CD8-positive, alpha-beta T cell (primary cell): ENCODE measurements at regions of chr3 and their contacts with region 1.

Region 1: GRCh38 chr3:71444028-71444860 is 139.3 kb downstream of the FOXP1 start:
- DNase-seq: peak; percentile 49 to 95 (median 74)
- ATAC-seq: peak; percentile 77
- H3K4me3 ChIP-seq: peak overlapping the region in 1 of 2 experiments; percentile 6
- H3K4me3 Mint-ChIP-seq: peak overlapping the region; percentile 68
- H3K27ac ChIP-seq: peak overlapping the region; percentile 78 to 83
- H3K27ac Mint-ChIP-seq: peak overlapping the region; percentile 98
- H3K4me1 ChIP-seq: peaks cover 98% of the 10 kb centered on the region
- H3K4me1 Mint-ChIP-seq: peaks cover 97% of the 10 kb centered on the region
- H3K27me3 ChIP-seq: no peaks in the 10 kb centered on the region
- H3K27me3 Mint-ChIP-seq: no peaks in the 10 kb centered on the region
- CTCF ChIP-seq: no peak

Region 2: GRCh38 chr3:71130471-71131374 is 313.5 kb before region 1 on chr3:
- CTCF ChIA-PET with region 1: no interaction called
- POLR2A ChIA-PET with region 1: no interaction called
- intact Hi-C with region 1: loop called in 1 of 2 experiments (anchors 1 kb)
- DNase-seq: peak; percentile 52 to 90 (median 77)
- ATAC-seq: peak; percentile 74
- H3K4me3 ChIP-seq: peak overlapping the region; percentile 56 to 57
- H3K4me3 Mint-ChIP-seq: peak overlapping the region; percentile 87
- H3K27ac ChIP-seq: peak overlapping the region; percentile 82 to 88
- H3K27ac Mint-ChIP-seq: peak overlapping the region; percentile 93
- H3K4me1 ChIP-seq: peaks cover 57% of the 10 kb centered on the region
- H3K4me1 Mint-ChIP-seq: peaks cover 80% of the 10 kb centered on the region
- H3K27me3 ChIP-seq: no peaks in the 10 kb centered on the region
- H3K27me3 Mint-ChIP-seq: no peaks in the 10 kb centered on the region
- CTCF ChIP-seq: no peak

Region 3: DNA sequence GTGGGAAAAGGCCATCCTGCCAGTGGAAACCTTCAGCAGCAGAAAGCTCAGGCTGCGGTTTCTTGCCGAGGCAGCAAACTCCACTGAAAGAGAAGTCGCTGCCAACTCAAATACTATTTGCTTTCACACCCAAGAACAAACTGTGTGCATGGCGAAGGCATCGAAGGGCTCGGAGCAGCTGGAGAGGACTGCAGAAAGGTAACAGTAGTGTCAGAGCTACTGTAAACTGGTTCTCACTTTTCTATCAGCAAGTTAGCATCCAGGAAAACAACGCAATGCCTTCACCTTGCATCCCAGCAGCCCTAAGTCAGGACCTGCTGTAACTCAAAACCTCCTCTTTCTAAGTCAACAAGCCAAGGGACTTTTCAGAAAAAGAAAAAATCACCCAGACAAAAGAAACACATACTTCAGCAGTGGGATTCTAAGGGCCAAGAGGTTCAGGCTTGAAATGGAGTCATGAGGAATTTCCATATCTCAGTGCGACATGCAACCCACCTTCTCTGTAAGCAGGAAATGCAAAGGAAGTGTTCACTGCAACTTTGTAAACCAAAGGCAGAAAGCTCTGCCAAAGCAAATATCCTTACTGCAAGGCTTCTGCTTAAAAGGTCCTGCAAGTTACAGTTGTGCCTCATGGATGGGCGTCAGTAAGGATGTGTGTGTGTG is 54.2 kb before region 1 on chr3:
- CTCF ChIA-PET with region 1: no interaction called
- POLR2A ChIA-PET with region 1: interaction called, 3 read pairs
- intact Hi-C with region 1: loop called in 1 of 2 experiments (anchors 1 kb)
- DNase-seq: peak in 8 of 9 experiments; percentile 12 to 75 (median 34)
- ATAC-seq: peak; percentile 43
- H3K4me3 ChIP-seq: peak overlapping the region; percentile 13 to 30
- H3K4me3 Mint-ChIP-seq: peak overlapping the region; percentile 79
- H3K27ac ChIP-seq: peak overlapping the region; percentile 50 to 63
- H3K27ac Mint-ChIP-seq: peak overlapping the region; percentile 95
- H3K4me1 ChIP-seq: peaks cover 68% of the 10 kb centered on the region
- H3K4me1 Mint-ChIP-seq: peaks cover 77% of the 10 kb centered on the region
- H3K27me3 ChIP-seq: no peaks in the 10 kb centered on the region
- H3K27me3 Mint-ChIP-seq: no peaks in the 10 kb centered on the region
- CTCF ChIP-seq: no peak

Region 4: DNA sequence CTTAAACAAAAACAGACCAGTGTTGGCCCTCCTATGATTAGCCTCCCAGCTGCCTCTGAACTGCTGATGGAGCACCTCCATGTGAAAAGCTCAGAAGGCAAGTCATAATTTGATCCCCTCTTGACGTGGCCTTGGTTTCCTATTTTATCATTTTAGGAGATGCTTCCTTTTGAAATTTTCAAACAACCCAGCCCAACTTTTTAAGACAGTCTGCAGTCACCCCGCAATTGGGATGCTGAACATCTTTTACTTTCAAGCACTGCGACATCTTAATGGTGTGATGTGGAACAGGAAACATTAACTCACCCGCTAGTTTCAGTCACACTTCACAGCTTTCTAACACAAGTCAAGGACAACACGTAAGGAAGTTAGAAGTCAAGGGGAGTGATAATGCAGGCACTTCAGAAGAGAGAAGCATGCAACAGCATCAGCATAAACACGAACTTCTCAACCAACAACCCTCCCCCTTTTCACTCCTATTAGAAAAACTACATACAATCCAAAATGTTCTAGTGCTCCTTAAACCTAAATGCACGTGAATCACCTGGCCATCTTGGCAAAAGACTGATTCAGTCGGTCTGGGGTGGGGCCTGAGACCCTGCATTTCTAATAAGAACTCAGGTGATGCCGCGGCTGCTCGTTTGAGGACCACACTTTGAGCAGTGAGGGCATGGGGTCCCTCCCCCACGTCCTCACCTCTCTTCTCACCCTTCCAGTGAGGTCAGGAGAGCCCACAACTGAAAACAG is 22.3 kb before region 1 on chr3:
- CTCF ChIA-PET with region 1: interaction called, 7 read pairs
- POLR2A ChIA-PET with region 1: interaction called, 6 read pairs
- intact Hi-C with region 1: loop called (anchors 1 to 2 kb)
- DNase-seq: peak in 5 of 9 experiments; percentile 38 to 88 (median 68)
- ATAC-seq: peak; percentile 85
- H3K4me3 ChIP-seq: peak overlapping the region in 1 of 2 experiments; percentile 1
- H3K4me3 Mint-ChIP-seq: peak overlapping the region; percentile 20
- H3K27ac ChIP-seq: peak overlapping the region; percentile 67 to 80
- H3K27ac Mint-ChIP-seq: peak overlapping the region; percentile 98
- H3K4me1 ChIP-seq: peaks cover 86% of the 10 kb centered on the region
- H3K4me1 Mint-ChIP-seq: peaks cover 91% of the 10 kb centered on the region
- H3K27me3 ChIP-seq: no peaks in the 10 kb centered on the region
- H3K27me3 Mint-ChIP-seq: no peaks in the 10 kb centered on the region
- CTCF ChIP-seq: no peak

Region 5: GRCh38 chr3:71456156-71456555 is 11.9 kb after region 1 on chr3:
- CTCF ChIA-PET with region 1: interaction called, 22 read pairs
- POLR2A ChIA-PET with region 1: interaction called, 65 read pairs
- intact Hi-C with region 1: loop called (anchors 1 to 2 kb)
- DNase-seq: peak in 2 of 9 experiments; percentile 46 to 70
- ATAC-seq: peak; percentile 39
- H3K4me3 ChIP-seq: peak overlapping the region; percentile 22 to 32
- H3K4me3 Mint-ChIP-seq: peak overlapping the region; percentile 81
- H3K27ac ChIP-seq: peak overlapping the region; percentile 57 to 78
- H3K27ac Mint-ChIP-seq: peak overlapping the region; percentile 99
- H3K4me1 ChIP-seq: peaks cover 85% of the 10 kb centered on the region
- H3K4me1 Mint-ChIP-seq: peaks cover 95% of the 10 kb centered on the region
- H3K27me3 ChIP-seq: no peaks in the 10 kb centered on the region
- H3K27me3 Mint-ChIP-seq: no peaks in the 10 kb centered on the region
- CTCF ChIP-seq: peak; percentile 50

Region 6: DNA sequence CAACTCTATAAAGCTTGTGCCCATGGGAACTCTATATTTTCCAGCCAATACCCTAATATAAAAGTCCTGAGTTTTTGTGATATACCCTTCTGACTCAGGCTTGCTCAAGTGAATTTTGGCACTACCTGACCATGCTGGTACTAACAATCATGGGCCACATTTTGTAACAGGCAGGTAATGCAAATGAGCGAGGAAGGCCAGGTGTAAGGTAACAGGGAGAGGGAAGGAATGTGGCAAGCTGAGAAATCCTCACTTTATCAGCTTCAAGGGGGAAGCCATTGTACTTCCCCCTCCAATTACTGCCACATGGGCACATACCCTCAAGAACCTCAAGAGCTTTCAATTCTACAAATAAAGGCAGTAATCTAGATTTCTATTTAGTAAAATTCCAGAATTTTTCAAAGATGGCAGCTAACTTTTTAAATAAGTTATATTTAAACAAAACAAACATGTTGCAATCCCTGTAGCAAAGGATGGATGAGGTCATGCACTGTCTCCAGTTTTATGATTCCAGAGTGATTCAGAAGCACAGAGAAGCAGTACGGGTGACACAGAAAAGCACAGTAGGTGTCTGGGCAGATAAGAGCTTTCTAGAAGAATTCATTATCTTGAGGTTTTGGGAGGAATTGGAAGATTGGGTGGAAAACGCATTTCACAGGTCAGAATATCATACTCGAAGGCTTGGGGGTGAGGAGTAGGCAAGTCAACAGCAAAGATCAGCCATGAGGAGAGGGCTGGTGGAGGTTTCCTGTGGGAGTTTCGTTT is 51.6 kb after region 1 on chr3:
- CTCF ChIA-PET with region 1: interaction called, 10 read pairs
- POLR2A ChIA-PET with region 1: interaction called, 79 read pairs
- intact Hi-C with region 1: loop called in 1 of 2 experiments (anchors 1 kb)
- DNase-seq: peak in 2 of 9 experiments; percentile 48 to 69
- ATAC-seq: no peak
- H3K4me3 ChIP-seq: peak overlapping the region; percentile 38 to 39
- H3K4me3 Mint-ChIP-seq: peak overlapping the region; percentile 76
- H3K27ac ChIP-seq: peak overlapping the region; percentile 46 to 80
- H3K27ac Mint-ChIP-seq: peak overlapping the region; percentile 94
- H3K4me1 ChIP-seq: peaks cover 65% of the 10 kb centered on the region
- H3K4me1 Mint-ChIP-seq: peaks cover 83% of the 10 kb centered on the region
- H3K27me3 ChIP-seq: no peaks in the 10 kb centered on the region
- H3K27me3 Mint-ChIP-seq: no peaks in the 10 kb centered on the region
- CTCF ChIP-seq: no peak

Region 7: GRCh38 chr3:71563827-71564226 is 119.6 kb after region 1 on chr3:
- CTCF ChIA-PET with region 1: no interaction called
- POLR2A ChIA-PET with region 1: no interaction called
- intact Hi-C with region 1: no loop called
- DNase-seq: no peak
- ATAC-seq: no peak
- H3K4me3 ChIP-seq: no peak overlapping the region
- H3K4me3 Mint-ChIP-seq: no peak overlapping the region
- H3K27ac ChIP-seq: no peak overlapping the region
- H3K27ac Mint-ChIP-seq: no peak overlapping the region
- H3K4me1 ChIP-seq: no peaks in the 10 kb centered on the region
- H3K4me1 Mint-ChIP-seq: peaks cover 3% of the 10 kb centered on the region
- H3K27me3 ChIP-seq: no peaks in the 10 kb centered on the region
- H3K27me3 Mint-ChIP-seq: no peaks in the 10 kb centered on the region
- CTCF ChIP-seq: no peak